CD4-positive, alpha-beta T cell (primary cell): ENCODE measurements at regions of chr13 and their contacts with region 1.

Region 1: GRCh38 chr13:23385931-23386330 is 47.6 kb downstream of the SACS start:
- DNase-seq: no peak
- ATAC-seq: no peak
- H3K4me3 ChIP-seq: no peak overlapping the region
- H3K4me3 Mint-ChIP-seq: no peak overlapping the region
- H3K27ac ChIP-seq: no peak overlapping the region
- H3K27ac Mint-ChIP-seq: no peak overlapping the region
- H3K4me1 ChIP-seq: no peaks in the 10 kb centered on the region
- H3K4me1 Mint-ChIP-seq: no peaks in the 10 kb centered on the region
- H3K27me3 ChIP-seq: no peaks in the 10 kb centered on the region
- H3K27me3 Mint-ChIP-seq: no peaks in the 10 kb centered on the region
- CTCF ChIP-seq: no peak

Region 2: DNA sequence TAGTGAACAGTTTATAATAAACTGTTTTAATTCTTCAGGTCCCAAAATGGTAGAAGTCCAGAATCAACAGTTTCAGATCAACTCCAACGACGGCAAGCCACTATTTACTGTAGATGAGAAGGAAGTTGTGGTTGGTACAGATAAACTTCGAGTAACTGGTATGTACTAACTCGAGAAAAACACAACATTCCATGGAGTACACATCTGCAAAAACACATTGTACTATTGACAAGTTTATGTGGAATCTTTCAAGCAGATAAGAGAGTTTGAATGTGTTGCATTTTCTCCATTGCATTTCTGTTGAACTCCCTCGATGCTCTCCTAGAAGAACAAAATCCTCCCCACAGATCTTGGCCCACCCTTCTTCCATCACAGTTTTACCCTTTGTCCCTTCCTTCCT is 106.6 kb before region 1 on chr13:
- CTCF ChIA-PET with region 1: no interaction called
- POLR2A ChIA-PET with region 1: no interaction called
- intact Hi-C with region 1: no loop called
- DNase-seq: no peak
- ATAC-seq: no peak
- H3K4me3 ChIP-seq: no peak overlapping the region
- H3K4me3 Mint-ChIP-seq: no peak overlapping the region
- H3K27ac ChIP-seq: no peak overlapping the region
- H3K27ac Mint-ChIP-seq: no peak overlapping the region
- H3K4me1 ChIP-seq: no peaks in the 10 kb centered on the region
- H3K4me1 Mint-ChIP-seq: no peaks in the 10 kb centered on the region
- H3K27me3 ChIP-seq: no peaks in the 10 kb centered on the region
- H3K27me3 Mint-ChIP-seq: peaks cover 10% of the 10 kb centered on the region
- CTCF ChIP-seq: no peak

Region 3: GRCh38 chr13:23348262-23349127 is 37.4 kb before region 1 on chr13:
- CTCF ChIA-PET with region 1: no interaction called
- POLR2A ChIA-PET with region 1: no interaction called
- intact Hi-C with region 1: no loop called
- DNase-seq: no peak
- ATAC-seq: no peak
- H3K4me3 ChIP-seq: no peak overlapping the region
- H3K4me3 Mint-ChIP-seq: no peak overlapping the region
- H3K27ac ChIP-seq: no peak overlapping the region
- H3K27ac Mint-ChIP-seq: no peak overlapping the region
- H3K4me1 ChIP-seq: no peaks in the 10 kb centered on the region
- H3K4me1 Mint-ChIP-seq: peaks cover 8% of the 10 kb centered on the region
- H3K27me3 ChIP-seq: no peaks in the 10 kb centered on the region
- H3K27me3 Mint-ChIP-seq: no peaks in the 10 kb centered on the region
- CTCF ChIP-seq: no peak

Region 4: GRCh38 chr13:23411706-23412105 is 25.8 kb after region 1 on chr13:
- CTCF ChIA-PET with region 1: no interaction called
- POLR2A ChIA-PET with region 1: no interaction called
- intact Hi-C with region 1: loop called in 1 of 2 experiments (anchors 1 kb)
- DNase-seq: no peak
- ATAC-seq: no peak
- H3K4me3 ChIP-seq: no peak overlapping the region
- H3K4me3 Mint-ChIP-seq: no peak overlapping the region
- H3K27ac ChIP-seq: no peak overlapping the region
- H3K27ac Mint-ChIP-seq: no peak overlapping the region
- H3K4me1 ChIP-seq: no peaks in the 10 kb centered on the region
- H3K4me1 Mint-ChIP-seq: no peaks in the 10 kb centered on the region
- H3K27me3 ChIP-seq: no peaks in the 10 kb centered on the region
- H3K27me3 Mint-ChIP-seq: no peaks in the 10 kb centered on the region
- CTCF ChIP-seq: no peak